Spleen (tissue), 13 donors: ENCODE measurements at regions of chr3 and their contacts with region 1.

Region 1: DNA sequence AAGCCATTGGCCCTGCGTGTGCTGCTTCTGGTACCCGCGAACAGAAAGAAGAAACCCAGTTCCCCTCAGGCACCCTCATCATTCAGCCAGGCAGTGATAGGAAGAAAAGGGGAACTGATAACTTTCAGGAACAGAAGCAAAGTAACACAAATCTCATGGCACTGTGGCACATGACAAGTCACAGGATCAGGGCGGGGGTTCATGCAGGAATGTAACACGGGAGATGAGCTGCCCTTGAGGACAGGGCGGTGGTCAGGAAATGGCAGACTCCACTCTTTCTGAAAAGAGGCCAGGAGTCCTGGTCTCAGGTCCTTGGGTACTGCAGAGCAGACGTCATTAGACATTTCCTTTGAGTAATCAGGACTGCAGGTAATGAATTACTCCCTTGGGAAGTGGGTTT is 95.5 kb downstream of the CCNL1 start:
- DNase-seq: no peak
- H3K4me3 ChIP-seq: no peak overlapping the region
- H3K27ac ChIP-seq: peak overlapping the region in 2 of 8 donors; percentile 8 to 21
- H3K4me1 ChIP-seq: peaks cover 0 to 32% (median 11%) of the 10 kb centered on the region in 6 donors
- H3K27me3 ChIP-seq: no peaks in the 10 kb centered on the region
- CTCF ChIP-seq: no peak
- POLR2A ChIP-seq: no peak

Region 2: DNA sequence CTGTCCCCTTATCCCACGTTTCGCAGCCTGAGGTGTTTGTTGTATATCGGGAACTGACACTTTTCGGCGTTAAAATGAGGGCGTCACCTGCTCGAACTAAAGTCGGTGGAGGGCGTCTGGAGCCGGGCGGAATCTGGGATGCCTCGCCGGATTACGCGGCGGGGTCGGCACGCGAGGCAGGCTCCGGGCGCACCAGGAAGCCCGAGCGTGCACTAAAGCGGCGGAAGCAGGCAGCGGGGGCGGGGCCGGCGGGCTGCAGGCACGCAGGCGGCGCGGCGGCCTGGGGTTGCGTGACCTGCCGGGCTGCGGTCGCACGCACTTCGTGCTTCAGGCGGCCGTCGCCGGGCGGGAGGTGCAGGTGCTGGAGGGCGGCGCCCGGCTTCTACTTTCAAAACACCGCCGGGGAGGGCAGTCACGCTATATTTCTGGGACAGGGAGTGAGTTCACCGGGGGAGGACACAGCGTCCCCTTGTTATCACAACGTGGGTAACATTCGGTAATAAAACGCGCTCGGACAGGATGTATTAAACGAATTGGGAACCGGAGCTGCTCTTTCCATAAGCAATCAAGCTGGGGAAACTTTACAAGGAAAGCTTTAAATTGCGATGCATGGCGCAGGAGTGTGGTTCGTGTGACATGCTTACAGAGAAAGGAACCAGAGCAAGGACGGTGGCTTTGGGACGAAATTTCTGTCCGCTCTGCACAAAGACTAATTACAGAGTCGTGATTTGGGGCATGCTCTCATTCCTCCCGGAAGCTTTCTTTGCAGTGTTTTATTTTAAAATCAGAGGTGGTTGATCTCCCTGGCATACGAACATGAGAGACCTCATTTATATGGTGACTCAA is 247.4 kb before region 1 on chr3:
- intact Hi-C with region 1: loop called (anchors 10 kb)
- DNase-seq: peak; percentile 98
- H3K4me3 ChIP-seq: peak overlapping the region; percentile 29 to 84 (median 64)
- H3K27ac ChIP-seq: peak overlapping the region; percentile 72 to 89 (median 81)
- H3K4me1 ChIP-seq: peaks cover 7 to 38% (median 28%) of the 10 kb centered on the region in 6 donors
- H3K27me3 ChIP-seq: no peaks in the 10 kb centered on the region
- CTCF ChIP-seq: peak in 3 of 11 experiments; percentile 11 to 13 (median 11)
- POLR2A ChIP-seq: peak in 1 of 3 donors; percentile 33

Region 3: DNA sequence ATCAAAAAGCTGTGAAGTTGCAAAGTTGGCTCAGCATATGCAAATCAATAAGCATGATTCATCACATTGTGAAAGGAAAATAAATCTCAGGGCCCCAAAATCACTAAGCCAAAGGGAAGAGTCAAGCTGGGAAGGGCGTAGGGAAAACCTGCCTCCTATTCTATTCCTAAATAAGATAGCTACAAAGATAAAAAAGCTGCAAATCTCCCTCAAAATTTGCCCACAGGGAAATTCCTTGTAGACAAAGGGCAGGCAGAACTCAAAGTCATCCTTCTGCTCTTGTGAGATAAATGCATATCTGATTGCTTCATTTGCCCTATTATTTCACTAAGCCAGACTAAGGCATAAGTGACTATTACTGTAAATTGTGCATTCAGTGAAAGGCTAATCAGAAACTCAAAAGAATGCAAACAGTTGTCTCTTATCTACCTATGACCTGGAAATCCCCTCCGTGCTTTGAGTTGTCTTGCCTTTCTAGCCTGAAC is 126.0 kb after region 1 on chr3:
- intact Hi-C with region 1: no loop called
- DNase-seq: no peak
- H3K4me3 ChIP-seq: no peak overlapping the region
- H3K27ac ChIP-seq: no peak overlapping the region
- H3K4me1 ChIP-seq: no peaks in the 10 kb centered on the region
- H3K27me3 ChIP-seq: no peaks in the 10 kb centered on the region
- CTCF ChIP-seq: no peak
- POLR2A ChIP-seq: no peak

Region 4: GRCh38 chr3:157405457-157405856 is 341.1 kb after region 1 on chr3:
- intact Hi-C with region 1: no loop called
- DNase-seq: no peak
- H3K4me3 ChIP-seq: no peak overlapping the region
- H3K27ac ChIP-seq: peak overlapping the region in 7 of 8 donors; percentile 44 to 79 (median 70)
- H3K4me1 ChIP-seq: peaks cover 0 to 4% (median 0%) of the 10 kb centered on the region in 6 donors
- H3K27me3 ChIP-seq: no peaks in the 10 kb centered on the region
- CTCF ChIP-seq: no peak
- POLR2A ChIP-seq: no peak